HEK293T (cell line): ENCODE measurements at regions of chr9 and their contacts with region 1.

Region 1: DNA sequence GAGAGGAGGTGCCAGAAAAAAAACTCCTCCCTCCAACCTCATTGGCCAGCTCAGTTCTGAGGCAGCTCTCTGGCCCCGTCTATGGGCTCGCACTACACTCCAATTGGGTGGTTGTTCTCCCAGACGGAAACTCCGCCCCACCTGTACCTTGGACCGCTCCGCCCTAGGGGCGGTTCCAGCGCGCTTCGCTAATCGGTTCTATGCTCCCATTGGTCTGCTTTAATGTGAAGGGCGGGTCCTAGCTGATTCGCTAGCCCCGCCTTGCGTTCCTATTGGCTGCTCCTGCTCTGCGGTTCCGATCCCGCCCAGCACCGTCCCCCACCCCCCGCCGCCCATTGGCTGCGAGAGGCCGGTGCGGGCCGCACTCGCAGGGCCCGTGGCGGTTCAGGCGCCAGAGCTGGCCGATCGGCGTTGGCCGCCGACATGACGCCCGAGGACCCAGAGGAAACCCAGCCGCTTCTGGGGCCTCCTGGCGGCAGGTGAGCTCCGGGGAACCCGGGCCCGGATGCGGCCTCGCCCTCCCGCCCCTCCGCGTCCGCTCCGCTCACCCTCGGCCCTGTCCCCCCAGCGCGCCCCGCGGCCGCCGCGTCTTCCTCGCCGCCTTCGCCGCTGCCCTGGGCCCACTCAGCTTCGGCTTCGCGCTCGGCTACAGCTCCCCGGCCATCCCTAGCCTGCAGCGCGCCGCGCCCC is at the start of gene SLC2A8:
- DNase-seq: peak; percentile 97

Region 2: GRCh38 chr9:127224178-127224882 is 172.6 kb before region 1 on chr9:
- CTCF ChIA-PET with region 1: interaction called, 3 read pairs
- POLR2A ChIA-PET with region 1: interaction called, 11 read pairs
- DNase-seq: peak; percentile 99

Region 3: DNA sequence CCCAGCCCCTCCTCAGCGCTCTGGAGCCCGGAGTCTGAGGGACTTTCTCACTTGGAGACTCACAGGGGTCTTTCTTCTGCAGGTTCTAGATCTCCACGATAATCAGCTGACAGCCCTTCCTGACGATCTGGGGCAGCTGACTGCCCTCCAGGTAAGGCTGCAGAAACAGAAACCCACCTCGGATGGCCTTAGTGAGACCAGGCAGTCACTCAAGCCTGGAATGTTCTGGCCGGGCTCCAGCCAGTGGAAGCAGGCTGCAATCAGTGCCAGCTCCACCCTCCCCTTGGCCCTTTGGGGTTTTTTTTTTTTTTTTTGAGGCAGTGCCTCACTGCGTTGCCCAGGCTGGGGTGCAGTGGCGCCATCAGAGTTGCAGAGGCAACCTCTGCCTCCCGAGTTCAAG is 62.0 kb after region 1 on chr9:
- CTCF ChIA-PET with region 1: no interaction called
- POLR2A ChIA-PET with region 1: no interaction called
- DNase-seq: no peak